ENCODE measurements at regions of chr4 and their contacts with region 1.

Region 1: DNA sequence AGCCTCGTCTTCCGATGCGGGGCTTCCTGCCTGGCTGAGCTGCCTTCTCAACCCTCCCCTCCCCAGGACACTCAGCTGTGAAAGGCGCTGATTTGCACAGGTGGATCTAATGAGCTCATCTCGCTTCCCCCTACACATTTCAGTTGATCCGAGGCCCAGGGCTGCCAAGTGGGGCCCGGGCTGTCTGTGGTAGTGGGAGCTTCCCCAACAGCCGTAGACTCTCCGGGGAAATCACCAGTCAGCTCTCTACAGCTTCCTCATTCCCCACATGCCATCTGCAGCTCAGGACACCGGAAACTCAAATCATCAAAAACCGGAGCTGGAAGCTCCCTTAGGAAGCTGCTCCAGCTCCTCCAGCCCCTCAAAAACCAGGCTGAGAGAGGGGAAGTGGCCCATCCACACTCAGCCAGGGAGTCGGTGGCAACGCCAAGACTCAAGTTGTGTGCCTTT is 56.2 kb downstream of the SMIM20 start:
- H3K4me3 Mint-ChIP-seq: peak overlapping the region; percentile 35
- H3K27ac Mint-ChIP-seq: peak overlapping the region; percentile 96
- H3K4me1 Mint-ChIP-seq: peaks cover 93% of the 10 kb centered on the region
- H3K27me3 Mint-ChIP-seq: peaks cover 6% of the 10 kb centered on the region

Region 2: GRCh38 chr4:25879991-25880651 is 90.1 kb before region 1 on chr4:
- intact Hi-C with region 1: no loop called
- H3K4me3 Mint-ChIP-seq: no peak overlapping the region
- H3K27ac Mint-ChIP-seq: no peak overlapping the region
- H3K4me1 Mint-ChIP-seq: peaks cover 32% of the 10 kb centered on the region
- H3K27me3 Mint-ChIP-seq: peaks cover 8% of the 10 kb centered on the region

Region 3: DNA sequence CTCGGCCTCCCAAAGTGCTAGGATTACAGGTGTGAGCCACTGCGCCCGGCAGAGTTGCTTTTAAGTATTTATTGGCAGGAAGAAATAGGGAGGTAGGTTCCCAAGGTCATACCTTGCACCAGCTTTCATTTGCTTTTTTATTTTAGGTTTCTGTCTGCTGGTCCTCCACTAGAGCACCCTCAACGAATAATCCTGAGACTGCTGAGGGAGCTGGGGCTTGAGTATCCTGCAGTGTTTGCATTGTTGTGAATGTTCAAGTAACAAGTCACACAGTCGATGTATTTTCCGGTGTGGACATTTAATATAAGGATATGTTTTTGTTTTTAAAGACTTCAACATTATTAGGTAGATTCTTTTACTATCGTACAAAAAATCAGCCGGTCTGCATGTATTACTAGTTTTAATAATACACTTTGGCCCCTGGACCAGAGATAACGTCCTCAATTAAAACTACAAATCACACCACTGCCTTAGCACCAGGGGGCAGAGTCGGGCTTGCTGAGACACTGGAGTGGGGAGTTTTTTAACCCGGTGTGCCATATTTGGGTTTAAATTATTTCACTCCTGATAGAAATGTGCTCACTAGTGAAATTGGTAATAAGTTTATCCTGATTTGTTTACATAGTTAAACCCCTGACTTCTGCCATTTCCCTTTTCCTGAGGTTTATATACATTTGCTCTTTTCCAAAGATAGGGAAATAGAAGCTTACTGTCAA is 44.6 kb before region 1 on chr4:
- intact Hi-C with region 1: loop called (anchors 1 kb)
- H3K4me3 Mint-ChIP-seq: no peak overlapping the region
- H3K27ac Mint-ChIP-seq: no peak overlapping the region
- H3K4me1 Mint-ChIP-seq: peaks cover 24% of the 10 kb centered on the region
- H3K27me3 Mint-ChIP-seq: no peaks in the 10 kb centered on the region

Region 4: GRCh38 chr4:25986807-25987206 is 16.6 kb after region 1 on chr4:
- intact Hi-C with region 1: loop called (anchors 2 kb)
- H3K4me3 Mint-ChIP-seq: no peak overlapping the region
- H3K27ac Mint-ChIP-seq: no peak overlapping the region
- H3K4me1 Mint-ChIP-seq: peaks cover 73% of the 10 kb centered on the region
- H3K27me3 Mint-ChIP-seq: peaks cover 10% of the 10 kb centered on the region

Region 5: GRCh38 chr4:26772096-26772495 is 801.8 kb after region 1 on chr4:
- intact Hi-C with region 1: no loop called
- H3K4me3 Mint-ChIP-seq: no peak overlapping the region
- H3K27ac Mint-ChIP-seq: no peak overlapping the region
- H3K4me1 Mint-ChIP-seq: no peaks in the 10 kb centered on the region
- H3K27me3 Mint-ChIP-seq: no peaks in the 10 kb centered on the region

Measured in dendritic cell treated with granulocyte-macrophage colony-stimulating factor and Interleukin-4, amounts not matched to agents 40 ng/mL and 50 ng/mL, for 4 days (primary cell).